Endothelial cell of umbilical vein (primary cell): ENCODE measurements at regions of chr12 and their contacts with region 1.

Region 1: DNA sequence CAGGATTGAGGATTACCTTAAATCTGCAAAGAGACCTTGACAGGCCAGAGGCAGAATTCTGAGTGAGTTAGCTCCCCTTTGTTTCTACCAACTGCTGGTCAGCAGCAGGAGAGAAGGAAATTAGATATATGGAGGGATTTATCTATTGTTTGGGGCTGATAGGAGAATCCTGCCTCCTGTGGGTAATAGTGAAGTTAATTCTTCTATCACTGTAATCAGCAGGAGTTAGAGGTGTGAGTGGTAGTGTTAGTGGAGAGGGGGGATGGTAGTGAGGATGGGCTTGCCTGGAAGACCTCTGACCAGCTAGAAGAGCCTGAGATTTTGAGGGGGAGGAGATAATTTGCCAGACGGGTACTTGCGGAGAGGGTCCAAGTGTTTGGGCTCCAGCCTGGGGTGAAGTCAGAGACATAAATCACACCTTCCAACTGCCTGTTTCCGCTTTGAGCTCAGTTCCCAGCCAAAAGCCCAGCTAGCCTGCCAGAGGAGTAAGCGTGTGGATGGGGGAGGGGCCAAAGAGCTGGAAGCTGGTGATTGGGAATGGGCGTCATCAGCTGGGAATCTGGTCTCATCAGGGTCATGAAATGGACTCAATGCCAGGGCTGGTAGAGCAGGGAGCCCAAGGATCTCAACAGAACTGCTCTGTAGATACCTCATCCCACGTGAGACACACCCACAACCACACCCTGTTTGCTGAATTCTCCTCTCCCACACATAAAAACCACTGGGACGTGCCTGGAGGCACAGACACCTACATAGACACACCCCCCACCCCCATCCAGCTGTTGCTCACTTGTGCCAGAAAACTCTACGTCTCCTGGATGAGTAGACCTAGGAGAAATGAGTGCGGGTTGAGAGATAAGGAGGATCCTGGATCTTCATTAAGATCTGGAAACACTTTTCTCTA is 13.1 kb upstream of the ITGA5 start:
- DNase-seq: peak; percentile 97
- H3K4me3 ChIP-seq: peak overlapping the region in 1 of 3 experiments; percentile 39
- H3K27ac ChIP-seq: peak overlapping the region; percentile 91
- H3K4me1 ChIP-seq: peaks cover 59% of the 10 kb centered on the region
- H3K27me3 ChIP-seq: no peaks in the 10 kb centered on the region
- CTCF ChIP-seq: no peak
- POLR2A ChIP-seq: no peak

Region 2: DNA sequence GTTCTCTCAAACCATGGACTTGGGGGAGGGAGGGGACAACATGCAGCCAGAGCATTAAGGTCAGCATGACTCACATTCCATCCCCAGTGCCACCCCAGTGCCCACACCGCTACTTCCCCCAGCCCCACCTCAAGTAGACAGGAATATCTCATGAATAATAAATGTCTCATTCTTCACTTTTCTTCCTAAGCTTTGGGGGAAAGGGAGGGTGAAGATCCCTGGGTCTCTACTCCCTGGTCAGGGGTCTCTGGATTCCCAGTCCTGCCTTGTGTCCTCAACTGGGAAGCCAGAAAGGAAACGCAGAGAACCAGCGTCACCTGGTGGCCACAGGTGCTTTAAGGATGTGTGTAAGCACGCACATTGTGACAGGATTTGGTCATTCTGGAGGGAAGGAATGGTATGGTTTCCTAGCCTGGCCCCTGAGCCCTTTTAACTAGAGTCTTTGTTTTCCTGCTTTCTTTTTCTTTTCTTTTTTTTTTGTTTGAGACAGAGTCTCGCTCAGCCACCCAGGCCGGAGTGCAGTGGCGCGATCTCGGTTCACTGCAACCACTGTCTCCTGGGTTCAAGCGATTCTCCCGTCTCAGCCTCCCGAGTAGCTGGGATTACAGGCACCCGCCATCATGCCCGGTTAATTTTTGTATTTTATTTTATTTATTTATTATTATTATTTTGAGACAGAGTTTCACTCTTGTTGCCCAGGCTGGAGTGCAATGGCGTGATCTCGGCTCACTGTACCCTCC is 71.3 kb before region 1 on chr12:
- CTCF ChIA-PET with region 1: no interaction called
- POLR2A ChIA-PET with region 1: no interaction called
- dilution Hi-C with region 1: no loop called
- intact Hi-C with region 1: no loop called
- DNase-seq: peak; percentile 81
- H3K4me3 ChIP-seq: no peak overlapping the region
- H3K27ac ChIP-seq: peak overlapping the region; percentile 82
- H3K4me1 ChIP-seq: peaks cover 27% of the 10 kb centered on the region
- H3K27me3 ChIP-seq: no peaks in the 10 kb centered on the region
- CTCF ChIP-seq: peak; percentile 78 to 84
- POLR2A ChIP-seq: no peak

Region 3: DNA sequence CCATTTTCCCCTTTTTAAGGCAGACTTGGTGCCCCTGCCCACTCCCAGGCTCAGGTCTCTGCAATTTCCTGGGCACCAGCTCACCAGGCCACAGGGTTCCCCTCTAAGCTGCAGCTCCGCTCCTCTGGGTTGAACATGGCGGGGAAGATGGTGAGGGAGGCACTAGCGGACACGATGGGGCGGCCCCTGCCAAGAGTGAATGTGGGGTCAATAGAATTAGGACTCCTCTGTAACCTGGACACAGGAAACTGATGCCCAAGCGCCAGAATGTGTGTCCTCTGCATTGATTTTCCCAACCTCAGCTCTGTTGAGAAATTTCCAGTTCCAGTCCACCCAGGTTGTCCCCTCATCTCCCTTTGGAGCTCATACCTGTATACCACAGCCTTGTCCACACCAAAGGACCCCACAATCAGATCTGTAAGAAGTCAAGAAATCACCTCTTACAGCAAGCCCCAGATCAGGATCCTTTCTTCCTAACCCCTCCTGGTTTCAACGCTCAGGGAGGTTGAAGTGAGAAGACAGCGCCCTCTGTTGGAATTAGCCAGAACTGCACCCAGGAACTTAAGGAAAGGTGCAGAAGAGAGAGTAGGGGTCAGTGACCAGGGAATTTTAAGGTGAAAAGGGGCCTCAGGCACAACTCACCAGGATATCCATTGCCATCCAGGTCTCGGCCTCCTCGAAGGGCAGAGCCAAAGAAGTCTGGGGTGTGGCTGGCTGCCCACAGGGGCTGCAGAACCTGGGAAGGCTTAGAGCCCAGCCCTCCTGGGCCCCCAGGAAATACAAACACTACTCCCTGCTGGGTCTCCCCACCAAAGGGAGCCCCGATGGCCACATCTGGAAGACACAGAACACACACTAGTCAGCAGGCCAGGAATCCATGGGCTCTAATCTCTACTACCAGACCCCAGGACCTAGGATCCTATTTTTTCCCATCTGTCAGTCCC is 27.8 kb before region 1 on chr12:
- CTCF ChIA-PET with region 1: interaction called, 517 read pairs
- POLR2A ChIA-PET with region 1: interaction called, 15 read pairs
- dilution Hi-C with region 1: no loop called
- intact Hi-C with region 1: loop called (anchors 1 kb)
- DNase-seq: peak; percentile 68
- H3K4me3 ChIP-seq: no peak overlapping the region
- H3K27ac ChIP-seq: no peak overlapping the region
- H3K4me1 ChIP-seq: peaks cover 9% of the 10 kb centered on the region
- H3K27me3 ChIP-seq: no peaks in the 10 kb centered on the region
- CTCF ChIP-seq: peak; percentile 83 to 94
- POLR2A ChIP-seq: no peak

Region 4: GRCh38 chr12:54411391-54412241 is 20.5 kb before region 1 on chr12:
- CTCF ChIA-PET with region 1: interaction called, 517 read pairs
- POLR2A ChIA-PET with region 1: interaction called, 60 read pairs
- dilution Hi-C with region 1: no loop called
- intact Hi-C with region 1: loop called (anchors 1 kb)
- DNase-seq: peak; percentile 88
- H3K4me3 ChIP-seq: no peak overlapping the region
- H3K27ac ChIP-seq: peak overlapping the region; percentile 96
- H3K4me1 ChIP-seq: peaks cover 58% of the 10 kb centered on the region
- H3K27me3 ChIP-seq: no peaks in the 10 kb centered on the region
- CTCF ChIP-seq: no peak
- POLR2A ChIP-seq: no peak

Region 5: DNA sequence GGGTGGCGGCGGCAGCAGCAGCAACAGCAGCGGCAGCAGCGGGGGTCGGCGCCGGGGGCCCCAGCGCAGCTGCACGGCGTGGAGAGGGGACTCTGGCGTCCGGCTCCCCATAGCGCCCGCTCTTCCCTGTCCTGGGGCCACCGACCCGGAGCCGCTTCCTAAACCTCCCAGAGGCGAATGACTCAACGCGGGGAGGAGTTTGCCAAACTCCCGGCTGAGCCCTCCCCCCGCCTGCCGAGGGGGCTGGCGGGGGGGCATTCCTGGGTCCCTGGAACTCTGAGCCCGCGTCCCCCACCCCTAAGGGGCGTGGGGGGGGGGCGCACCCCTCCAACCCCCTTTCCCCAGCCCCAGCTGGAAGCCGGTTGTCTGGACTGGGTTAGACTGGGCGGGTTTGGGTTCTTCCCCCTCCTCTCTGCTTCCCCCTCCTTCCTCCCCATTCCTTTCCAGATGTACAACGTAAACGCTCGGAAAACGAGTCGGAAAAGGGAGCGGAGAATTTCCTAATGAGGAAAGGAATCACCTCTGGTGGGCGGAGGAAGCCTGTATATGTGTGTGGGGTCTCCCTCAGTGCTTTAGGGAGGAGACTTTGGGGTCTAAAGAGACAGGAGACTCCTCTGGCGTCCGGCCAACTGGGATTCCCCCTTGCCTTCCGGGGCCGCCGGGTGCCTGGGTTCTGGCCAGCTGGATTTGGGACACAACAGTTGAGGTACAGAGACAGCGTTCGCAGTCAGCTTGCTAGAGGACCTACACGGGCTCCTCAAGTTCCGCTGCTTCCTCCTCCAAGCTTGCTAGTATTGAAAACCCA is 12.9 kb before region 1 on chr12 and contains the start of gene ITGA5:
- CTCF ChIA-PET with region 1: interaction called, 221 read pairs
- POLR2A ChIA-PET with region 1: interaction called, 60 read pairs
- dilution Hi-C with region 1: no loop called
- intact Hi-C with region 1: loop called (anchors 1 kb)
- DNase-seq: peak; percentile 75
- H3K4me3 ChIP-seq: peak within 1 kb of the TSS; percentile 65 to 97 (median 83)
- H3K27ac ChIP-seq: peak within 1 kb of the TSS; percentile 79
- H3K4me1 ChIP-seq: peaks cover 68% of the 10 kb centered on the region
- H3K27me3 ChIP-seq: no peaks in the 10 kb centered on the region
- CTCF ChIP-seq: no peak
- POLR2A ChIP-seq: peak; percentile 90
- total RNA-seq, gene ITGA5: 938 and 994 TPM in 2 replicates